ENCODE measurements at regions of chr18 and their contacts with region 1.

Region 1: DNA sequence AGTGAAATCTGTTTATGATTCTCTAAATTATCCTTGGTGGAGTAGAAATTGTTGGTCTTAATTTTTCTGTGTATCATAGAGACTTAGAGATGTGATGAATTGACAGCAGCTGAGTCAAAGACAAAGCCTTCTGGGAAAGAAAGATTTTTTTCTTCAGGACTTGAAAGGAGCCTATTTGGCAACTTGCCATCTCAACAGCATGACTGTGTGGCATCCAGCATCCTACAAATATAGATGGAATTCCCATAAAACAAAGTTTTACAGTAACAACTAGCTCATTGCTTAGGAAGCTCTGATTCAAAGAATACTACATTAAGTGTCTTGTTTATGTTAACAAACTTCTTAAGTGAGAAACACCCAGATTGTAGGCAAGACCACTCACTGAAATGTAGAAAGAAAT is 79.2 kb upstream of the SETBP1 start:
- DNase-seq: no peak
- H3K4me3 Mint-ChIP-seq: no peak overlapping the region
- H3K27ac Mint-ChIP-seq: no peak overlapping the region
- H3K4me1 Mint-ChIP-seq: peaks cover 9% of the 10 kb centered on the region
- H3K27me3 Mint-ChIP-seq: no peaks in the 10 kb centered on the region
- CTCF ChIP-seq: no peak

Region 2: DNA sequence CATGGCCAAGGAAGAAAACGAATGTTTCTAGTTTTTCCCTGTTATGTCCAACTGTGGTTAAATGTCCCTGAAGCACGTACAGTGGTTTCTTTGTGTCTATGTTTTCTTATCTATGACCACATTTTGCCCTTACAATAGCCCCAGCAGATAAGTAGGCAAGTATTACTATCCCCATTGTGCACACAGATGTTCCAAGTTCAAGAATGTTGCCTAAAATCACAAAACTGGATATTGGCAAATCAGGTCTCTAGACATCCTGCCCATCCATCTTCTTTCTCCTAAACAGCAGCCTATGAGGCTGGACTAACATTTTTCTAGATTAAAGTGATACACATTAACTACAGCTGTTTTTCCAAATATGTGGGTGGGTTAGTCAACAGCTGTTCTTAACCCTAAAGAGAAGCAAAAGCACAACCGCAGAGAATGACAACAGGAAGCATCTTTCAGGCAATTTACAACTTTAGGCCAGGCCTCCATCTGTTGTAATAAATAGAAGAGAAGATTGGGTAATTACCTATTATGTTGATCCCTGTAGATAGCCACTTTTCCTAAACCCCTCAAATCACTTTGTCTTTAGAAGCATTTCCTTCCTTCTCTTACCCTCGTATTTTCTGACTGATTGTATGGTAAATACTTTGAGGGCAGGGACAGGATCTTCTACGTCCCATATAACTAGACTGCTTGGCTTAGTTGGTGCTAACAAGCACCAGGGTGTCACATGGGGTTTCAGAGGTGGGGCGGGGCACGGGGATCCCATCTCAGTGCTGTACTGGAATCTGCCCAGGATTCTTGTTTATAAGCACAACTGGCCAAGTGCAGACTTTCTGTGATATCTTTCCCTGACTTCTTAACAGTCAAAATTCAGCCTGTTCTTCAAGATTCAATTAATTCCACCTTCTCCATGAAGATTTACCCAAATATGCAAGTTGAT is 52.9 kb before region 1 on chr18:
- CTCF ChIA-PET with region 1: no interaction called
- intact Hi-C with region 1: loop called (anchors 10 kb)
- DNase-seq: no peak
- H3K4me3 Mint-ChIP-seq: no peak overlapping the region
- H3K27ac Mint-ChIP-seq: no peak overlapping the region
- H3K4me1 Mint-ChIP-seq: peaks cover 10% of the 10 kb centered on the region
- H3K27me3 Mint-ChIP-seq: no peaks in the 10 kb centered on the region
- CTCF ChIP-seq: no peak

Region 3: GRCh38 chr18:44700652-44701051 is 99.2 kb after region 1 on chr18:
- CTCF ChIA-PET with region 1: no interaction called
- intact Hi-C with region 1: no loop called
- DNase-seq: no peak
- H3K4me3 Mint-ChIP-seq: no peak overlapping the region
- H3K27ac Mint-ChIP-seq: no peak overlapping the region
- H3K4me1 Mint-ChIP-seq: peaks cover 13% of the 10 kb centered on the region
- H3K27me3 Mint-ChIP-seq: no peaks in the 10 kb centered on the region
- CTCF ChIP-seq: no peak

Measured in Calu3 (cell line).